ENCODE measurements at regions of chr5 and their contacts with region 1.

Region 1: DNA sequence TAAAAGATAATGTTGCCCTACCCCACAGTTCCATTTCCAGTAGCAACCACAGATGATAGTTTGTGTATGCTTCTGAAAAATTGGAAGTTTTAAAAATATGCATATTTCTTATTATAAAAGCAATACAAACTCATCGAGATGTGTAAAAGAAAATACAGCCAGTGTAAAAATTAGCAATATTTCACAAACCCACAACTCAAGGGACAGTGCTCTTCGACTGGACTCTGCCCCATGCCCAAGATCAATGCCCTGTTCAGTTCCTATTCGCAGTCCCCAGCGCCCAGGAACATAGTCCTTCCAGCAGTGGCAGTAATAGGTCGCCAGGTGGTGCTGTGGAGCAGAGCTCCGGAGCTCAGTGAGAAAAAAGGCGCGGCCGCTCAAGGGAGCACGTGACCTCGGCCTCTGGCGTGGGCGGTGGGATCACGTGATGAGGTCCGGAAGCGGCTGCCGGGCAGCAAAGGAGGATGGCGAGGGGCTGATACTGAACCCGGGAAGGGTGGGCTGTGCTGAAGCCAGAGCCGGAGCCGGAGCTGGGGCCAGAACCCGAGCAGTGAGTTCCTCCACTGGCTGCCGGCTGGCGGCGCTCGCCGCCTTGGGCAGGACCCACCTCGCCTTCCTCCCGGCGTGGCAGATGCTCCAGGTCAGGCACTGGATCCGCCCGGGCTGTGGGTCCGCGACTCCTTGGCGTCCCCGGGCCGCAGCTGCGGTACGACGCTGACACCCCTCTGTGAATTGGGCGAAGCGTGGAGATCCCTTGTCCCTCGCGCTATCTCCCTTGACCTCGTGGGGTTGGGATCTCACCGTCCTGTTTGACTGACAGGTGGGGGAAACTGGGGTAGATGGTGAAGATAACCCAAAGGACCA is at the start of gene SLC36A1:
- DNase-seq: peak; percentile 97
- H3K4me3 Mint-ChIP-seq: peak within 1 kb of the TSS; percentile 96
- H3K27ac Mint-ChIP-seq: peak within 1 kb of the TSS; percentile 76
- H3K4me1 Mint-ChIP-seq: peaks cover 15% of the 10 kb centered on the region
- H3K27me3 Mint-ChIP-seq: no peaks in the 10 kb centered on the region
- total RNA-seq, gene SLC36A1: 2.6 to 3.1 TPM

Region 2: GRCh38 chr5:151157426-151158286 is 289.8 kb before region 1 on chr5 and contains the start of gene ANXA6:
- CTCF ChIA-PET with region 1: no interaction called
- intact Hi-C with region 1: loop called (anchors 10 kb)
- DNase-seq: peak; percentile 71
- H3K4me3 Mint-ChIP-seq: peak within 1 kb of the TSS; percentile 92
- H3K27ac Mint-ChIP-seq: peak within 1 kb of the TSS; percentile 90
- H3K4me1 Mint-ChIP-seq: peaks cover 56% of the 10 kb centered on the region
- H3K27me3 Mint-ChIP-seq: no peaks in the 10 kb centered on the region
- total RNA-seq, gene ANXA6: 272 to 284 TPM

Region 3: DNA sequence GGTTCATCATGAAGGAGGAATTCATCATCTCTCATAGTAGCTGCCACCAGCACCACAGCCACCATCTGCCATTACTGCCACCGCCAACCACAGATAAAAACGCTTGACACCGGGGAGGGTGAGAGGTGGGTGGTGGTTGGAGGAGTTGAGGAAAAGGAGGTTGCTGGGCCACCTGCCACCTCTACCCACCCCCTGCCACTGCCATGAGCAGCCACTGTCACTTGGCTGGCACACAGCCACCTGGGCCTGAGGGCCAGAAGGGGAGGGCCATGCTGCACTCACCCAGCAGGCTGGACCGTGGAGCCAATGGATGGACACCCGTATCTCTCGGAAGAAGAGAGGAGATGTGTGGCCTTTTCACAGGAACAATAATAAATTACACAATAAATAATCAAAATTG is 68.8 kb before region 1 on chr5:
- CTCF ChIA-PET with region 1: no interaction called
- intact Hi-C with region 1: no loop called
- DNase-seq: no peak
- H3K4me3 Mint-ChIP-seq: no peak overlapping the region
- H3K27ac Mint-ChIP-seq: no peak overlapping the region
- H3K4me1 Mint-ChIP-seq: no peaks in the 10 kb centered on the region
- H3K27me3 Mint-ChIP-seq: peaks cover 5% of the 10 kb centered on the region

Region 4: GRCh38 chr5:151499501-151500035 is 52.2 kb after region 1 on chr5:
- CTCF ChIA-PET with region 1: interaction called, 18 read pairs
- intact Hi-C with region 1: loop called (anchors 1 kb)
- DNase-seq: no peak
- H3K4me3 Mint-ChIP-seq: no peak overlapping the region
- H3K27ac Mint-ChIP-seq: no peak overlapping the region
- H3K4me1 Mint-ChIP-seq: peaks cover 4% of the 10 kb centered on the region
- H3K27me3 Mint-ChIP-seq: no peaks in the 10 kb centered on the region

Region 5: GRCh38 chr5:151612689-151613427 is 165.5 kb after region 1 on chr5:
- CTCF ChIA-PET with region 1: interaction called, 5 read pairs
- intact Hi-C with region 1: loop called (anchors 1 kb)
- DNase-seq: peak; percentile 82
- H3K4me3 Mint-ChIP-seq: no peak overlapping the region
- H3K27ac Mint-ChIP-seq: peak overlapping the region; percentile 80
- H3K4me1 Mint-ChIP-seq: peaks cover 39% of the 10 kb centered on the region
- H3K27me3 Mint-ChIP-seq: no peaks in the 10 kb centered on the region

Region 6: DNA sequence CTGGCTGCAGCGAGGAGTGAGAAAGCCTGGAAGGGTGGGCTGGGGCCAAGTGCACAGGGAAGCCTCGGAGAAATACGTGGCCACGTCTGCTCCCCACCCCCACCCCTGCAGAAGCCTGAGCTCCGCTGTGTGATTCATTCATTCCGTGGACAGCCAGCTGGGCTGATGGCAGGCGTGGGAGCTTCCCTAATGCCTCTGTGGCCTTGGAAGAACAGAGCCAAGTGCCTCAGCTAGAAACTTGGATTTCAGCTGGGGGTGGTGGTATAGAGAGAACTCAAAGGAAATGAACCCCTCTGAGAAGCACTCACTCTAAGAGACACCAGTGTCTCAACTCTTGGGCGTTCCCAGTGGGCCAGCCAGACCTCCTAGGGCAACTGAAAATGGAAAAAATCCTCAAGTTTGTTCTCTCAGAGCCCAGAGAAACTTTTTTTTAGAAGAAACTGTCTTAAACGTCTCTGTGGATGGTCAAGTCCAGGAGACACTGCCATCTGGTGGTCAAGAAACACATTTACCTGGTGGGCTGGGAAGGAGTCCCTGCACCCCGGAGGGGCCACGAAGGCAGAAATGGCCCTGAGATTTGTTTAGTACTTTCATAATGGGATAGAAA is 293.0 kb after region 1 on chr5:
- CTCF ChIA-PET with region 1: interaction called, 3 read pairs
- intact Hi-C with region 1: loop called (anchors 2 kb)
- DNase-seq: peak; percentile 64
- H3K4me3 Mint-ChIP-seq: no peak overlapping the region
- H3K27ac Mint-ChIP-seq: no peak overlapping the region
- H3K4me1 Mint-ChIP-seq: peaks cover 15% of the 10 kb centered on the region
- H3K27me3 Mint-ChIP-seq: no peaks in the 10 kb centered on the region